ENCODE measurements at regions of chr9 and their contacts with region 1.

Region 1: GRCh38 chr9:35111001-35111933 is 4.4 kb downstream of the ATOSB start:
- DNase-seq: peak; percentile 97
- H3K4me3 ChIP-seq: peak overlapping the region; percentile 68 to 93 (median 73)
- H3K27ac ChIP-seq: peak overlapping the region; percentile 69
- H3K4me1 ChIP-seq: peaks cover 35% of the 10 kb centered on the region
- H3K27me3 ChIP-seq: no peaks in the 10 kb centered on the region
- CTCF ChIP-seq: no peak

Region 2: GRCh38 chr9:34744295-34745221 is 366.7 kb before region 1 on chr9:
- CTCF ChIA-PET with region 1: no interaction called
- dilution Hi-C with region 1: no loop called
- in situ Hi-C with region 1: no loop called
- intact Hi-C with region 1: loop called (anchors 5 kb)
- DNase-seq: peak; percentile 98
- H3K4me3 ChIP-seq: peak overlapping the region in 1 of 3 experiments; percentile 10
- H3K27ac ChIP-seq: peak overlapping the region; percentile 60
- H3K4me1 ChIP-seq: peaks cover 40% of the 10 kb centered on the region
- H3K27me3 ChIP-seq: no peaks in the 10 kb centered on the region
- CTCF ChIP-seq: no peak

Region 3: GRCh38 chr9:34994260-34994899 is 116.9 kb before region 1 on chr9:
- CTCF ChIA-PET with region 1: no interaction called
- dilution Hi-C with region 1: no loop called
- in situ Hi-C with region 1: no loop called
- intact Hi-C with region 1: loop called (anchors 5 kb)
- DNase-seq: peak; percentile 43
- H3K4me3 ChIP-seq: no peak overlapping the region
- H3K27ac ChIP-seq: no peak overlapping the region
- H3K4me1 ChIP-seq: peaks cover 36% of the 10 kb centered on the region
- H3K27me3 ChIP-seq: no peaks in the 10 kb centered on the region
- CTCF ChIP-seq: peak; percentile 82

Region 4: GRCh38 chr9:35096035-35096849 is 15.0 kb before region 1 on chr9 and contains the start of gene PIGO:
- CTCF ChIA-PET with region 1: no interaction called
- dilution Hi-C with region 1: no loop called
- in situ Hi-C with region 1: no loop called
- intact Hi-C with region 1: loop called (anchors 1 kb)
- DNase-seq: peak; percentile 84
- H3K4me3 ChIP-seq: peak within 1 kb of the TSS; percentile 76 to 100 (median 82)
- H3K27ac ChIP-seq: peak within 1 kb of the TSS; percentile 91
- H3K4me1 ChIP-seq: peaks cover 7% of the 10 kb centered on the region
- H3K27me3 ChIP-seq: no peaks in the 10 kb centered on the region
- CTCF ChIP-seq: peak; percentile 93
- total RNA-seq, gene PIGO: 17.8 to 33.3 TPM

Region 5: GRCh38 chr9:35664531-35665470 is 553.5 kb after region 1 on chr9 and contains the start of gene ARHGEF39:
- CTCF ChIA-PET with region 1: no interaction called
- dilution Hi-C with region 1: no loop called
- in situ Hi-C with region 1: no loop called
- intact Hi-C with region 1: loop called (anchors 2 kb)
- DNase-seq: peak; percentile 79
- H3K4me3 ChIP-seq: peak within 1 kb of the TSS; percentile 32 to 77 (median 63)
- H3K27ac ChIP-seq: peak within 1 kb of the TSS; percentile 50
- H3K4me1 ChIP-seq: peaks cover 39% of the 10 kb centered on the region
- H3K27me3 ChIP-seq: no peaks in the 10 kb centered on the region
- CTCF ChIP-seq: peak in 1 of 2 donors; percentile 16
- total RNA-seq, gene ARHGEF39: 0.33 to 5.7 TPM